Activated B cell treated with CpG ODN at 0.5 μM for 24 hours (primary cell): ENCODE measurements at regions of chr2 and their contacts with region 1.

Region 1: DNA sequence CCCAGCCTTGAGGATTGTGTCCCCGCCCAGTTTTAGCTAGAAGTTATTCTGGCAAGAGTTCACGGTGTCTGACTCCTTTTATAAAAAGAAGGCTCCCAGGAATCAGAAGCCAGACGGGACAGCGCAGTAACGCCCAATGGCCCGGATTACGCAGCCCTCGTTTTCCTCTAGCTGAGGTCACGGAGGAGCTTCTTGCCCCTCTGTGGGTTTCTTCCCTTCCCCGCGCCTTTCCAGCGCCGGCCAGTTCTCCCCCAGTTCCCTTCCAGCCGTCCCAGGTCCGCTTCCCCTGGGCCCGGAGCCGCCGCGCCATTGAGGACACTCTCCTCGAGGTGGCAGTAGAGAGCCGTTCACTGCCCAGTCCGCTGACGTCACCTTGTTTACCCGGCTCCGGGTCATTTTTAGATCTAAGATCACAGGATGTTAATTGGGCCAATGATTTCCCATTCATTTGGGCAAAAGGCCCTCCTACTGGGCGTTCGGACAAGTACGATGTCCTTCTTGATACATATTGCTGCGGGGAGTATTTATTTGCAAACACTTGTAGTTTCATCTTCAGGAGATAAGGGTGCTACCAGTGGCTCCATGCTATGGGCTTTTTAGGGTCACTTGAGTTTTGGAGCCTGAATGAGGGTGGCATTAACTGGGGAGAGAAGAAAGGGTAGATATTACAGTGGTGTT is 81.5 kb upstream of the PPM1B start:
- DNase-seq: peak; percentile 74
- ATAC-seq: peak; percentile 86
- H3K4me3 Mint-ChIP-seq: peak overlapping the region; percentile 83
- H3K27ac Mint-ChIP-seq: peak overlapping the region; percentile 3
- H3K4me1 Mint-ChIP-seq: peaks cover 27% of the 10 kb centered on the region
- H3K27me3 Mint-ChIP-seq: no peaks in the 10 kb centered on the region
- CTCF ChIP-seq: peak; percentile 27

Region 2: GRCh38 chr2:43169987-43170386 is 917.2 kb before region 1 on chr2:
- CTCF ChIA-PET with region 1: no interaction called
- POLR2A ChIA-PET with region 1: no interaction called
- intact Hi-C with region 1: no loop called
- DNase-seq: peak; percentile 43
- ATAC-seq: no peak
- H3K4me3 Mint-ChIP-seq: peak overlapping the region; percentile 79
- H3K27ac Mint-ChIP-seq: peak overlapping the region; percentile 98
- H3K4me1 Mint-ChIP-seq: peaks cover 82% of the 10 kb centered on the region
- H3K27me3 Mint-ChIP-seq: no peaks in the 10 kb centered on the region
- CTCF ChIP-seq: no peak

Region 3: GRCh38 chr2:43251171-43251731 is 835.9 kb before region 1 on chr2:
- CTCF ChIA-PET with region 1: no interaction called
- POLR2A ChIA-PET with region 1: no interaction called
- intact Hi-C with region 1: no loop called
- DNase-seq: no peak
- ATAC-seq: no peak
- H3K4me3 Mint-ChIP-seq: no peak overlapping the region
- H3K27ac Mint-ChIP-seq: no peak overlapping the region
- H3K4me1 Mint-ChIP-seq: no peaks in the 10 kb centered on the region
- H3K27me3 Mint-ChIP-seq: no peaks in the 10 kb centered on the region
- CTCF ChIP-seq: no peak

Region 4: DNA sequence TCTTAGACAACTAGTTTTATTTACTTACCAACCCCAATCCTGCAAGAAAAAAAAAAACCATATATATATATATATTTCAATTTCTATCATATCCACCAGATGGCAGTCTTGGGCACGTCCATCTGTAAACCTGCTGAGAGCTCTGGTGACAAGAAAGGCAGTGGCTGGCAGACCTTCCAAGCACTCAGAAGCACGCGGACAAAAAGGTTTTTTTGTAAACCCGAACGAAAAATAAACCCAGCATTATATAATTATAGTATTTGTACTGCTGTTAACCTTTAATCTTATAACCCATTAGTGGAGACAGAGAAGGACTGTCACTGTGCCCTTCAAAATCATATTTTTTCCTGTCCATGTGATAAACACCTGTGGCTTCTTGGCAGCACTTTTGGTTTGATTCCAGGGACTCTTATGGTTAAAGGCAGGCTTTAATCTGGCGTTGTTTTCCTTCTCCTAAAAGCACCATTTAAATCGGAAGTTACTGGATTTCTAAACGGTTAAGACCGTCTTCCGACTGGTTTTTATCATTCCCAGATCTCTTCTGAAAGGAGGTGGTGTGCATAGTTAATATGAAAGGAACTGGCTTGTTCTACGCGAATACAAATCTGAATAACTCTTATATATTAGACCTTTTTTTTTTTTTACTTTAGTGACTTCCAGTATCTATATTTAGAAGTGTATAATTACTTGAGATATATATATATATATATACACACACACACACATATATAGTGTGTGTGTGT is 157.1 kb after region 1 on chr2:
- CTCF ChIA-PET with region 1: interaction called, 7 read pairs
- POLR2A ChIA-PET with region 1: no interaction called
- intact Hi-C with region 1: loop called (anchors 2 kb)
- DNase-seq: no peak
- ATAC-seq: peak; percentile 91
- H3K4me3 Mint-ChIP-seq: peak overlapping the region; percentile 67
- H3K27ac Mint-ChIP-seq: peak overlapping the region; percentile 27
- H3K4me1 Mint-ChIP-seq: peaks cover 12% of the 10 kb centered on the region
- H3K27me3 Mint-ChIP-seq: no peaks in the 10 kb centered on the region
- CTCF ChIP-seq: no peak

Region 5: GRCh38 chr2:44342854-44343253 is 255.7 kb after region 1 on chr2:
- CTCF ChIA-PET with region 1: interaction called, 8 read pairs
- POLR2A ChIA-PET with region 1: no interaction called
- intact Hi-C with region 1: loop called (anchors 1 kb)
- DNase-seq: no peak
- ATAC-seq: no peak
- H3K4me3 Mint-ChIP-seq: no peak overlapping the region
- H3K27ac Mint-ChIP-seq: no peak overlapping the region
- H3K4me1 Mint-ChIP-seq: no peaks in the 10 kb centered on the region
- H3K27me3 Mint-ChIP-seq: no peaks in the 10 kb centered on the region
- CTCF ChIP-seq: no peak

Region 6: DNA sequence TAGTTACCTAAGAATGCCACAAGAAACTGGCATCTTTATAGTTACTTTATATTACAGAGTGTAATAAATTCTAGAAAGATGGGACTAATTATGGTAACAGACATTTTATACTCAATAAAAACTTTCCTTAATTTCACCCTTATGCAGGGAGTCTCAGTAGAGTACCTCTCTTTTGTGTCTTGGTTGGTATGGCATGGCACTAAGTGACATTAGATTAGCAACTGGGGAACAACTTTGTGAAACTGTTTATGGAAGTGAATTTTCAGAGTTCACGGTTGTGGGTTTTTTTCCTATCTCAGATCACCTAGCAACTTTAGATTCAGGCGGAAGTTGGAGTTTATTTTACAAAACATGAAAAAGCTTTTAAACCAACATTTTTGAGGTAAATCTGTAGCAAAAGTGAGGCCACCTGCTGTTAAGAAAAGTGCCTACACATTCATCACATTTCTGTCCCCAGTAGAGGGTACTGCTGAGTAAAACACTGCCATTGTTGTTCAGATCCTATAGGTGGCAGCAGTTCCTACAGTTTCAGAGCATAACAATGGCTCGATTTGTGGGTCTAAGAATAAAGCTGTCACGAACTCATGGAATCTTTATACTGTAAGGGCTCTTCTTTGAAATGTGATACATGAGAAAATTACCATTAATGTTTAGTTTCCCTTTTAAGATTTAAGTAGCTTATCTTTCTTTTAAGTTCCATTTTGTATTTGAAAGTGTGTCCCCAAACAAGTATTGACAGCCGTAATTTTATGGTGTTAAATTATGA is 392.1 kb after region 1 on chr2:
- CTCF ChIA-PET with region 1: no interaction called
- POLR2A ChIA-PET with region 1: no interaction called
- intact Hi-C with region 1: loop called (anchors 1 kb)
- DNase-seq: no peak
- ATAC-seq: peak; percentile 100
- H3K4me3 Mint-ChIP-seq: no peak overlapping the region
- H3K27ac Mint-ChIP-seq: no peak overlapping the region
- H3K4me1 Mint-ChIP-seq: peaks cover 3% of the 10 kb centered on the region
- H3K27me3 Mint-ChIP-seq: no peaks in the 10 kb centered on the region
- CTCF ChIP-seq: peak; percentile 100